Activated CD4-positive, alpha-beta T cell treated with anti-CD3 and anti-CD28 coated beads for 36 hours (primary cell): ENCODE measurements at regions of chr1 and their contacts with region 1.

Region 1: DNA sequence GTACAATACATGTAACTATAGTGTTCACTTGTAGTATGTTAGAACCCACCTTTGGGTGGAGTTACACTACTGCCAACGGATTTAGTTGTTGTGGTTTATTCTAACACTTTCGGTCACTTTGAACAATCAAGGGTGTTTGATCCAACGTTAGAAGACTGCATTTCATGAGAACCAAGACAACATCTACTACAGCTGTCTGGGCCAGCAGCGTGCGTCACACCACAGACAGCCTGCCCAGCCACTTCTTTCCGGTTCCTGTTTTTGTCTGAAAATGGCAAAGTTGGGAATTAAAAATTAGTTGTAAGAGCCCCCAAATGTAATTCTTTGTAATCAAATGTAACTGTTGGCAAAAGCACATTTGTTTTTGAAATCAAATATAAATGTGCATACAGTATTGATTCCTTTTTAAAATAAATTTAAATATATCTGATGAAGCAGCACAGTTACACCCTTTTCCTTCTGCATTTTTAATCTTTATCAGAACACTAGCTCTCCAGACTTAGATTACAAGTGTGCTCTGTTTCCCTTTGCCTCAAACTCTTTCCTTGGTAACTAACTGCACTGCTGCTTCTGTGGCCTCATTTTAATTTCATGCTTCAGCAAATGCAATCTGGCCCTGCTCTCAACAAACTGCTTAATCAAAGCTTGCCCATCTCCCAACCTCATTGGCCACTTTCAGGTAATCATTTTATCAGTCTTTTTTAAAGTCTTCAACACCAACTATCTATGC is 86.6 kb upstream of the DPH5 start:
- DNase-seq: peak; percentile 73
- ATAC-seq: peak; percentile 88
- H3K4me3 Mint-ChIP-seq: peak overlapping the region; percentile 32
- H3K27ac Mint-ChIP-seq: peak overlapping the region; percentile 94
- H3K4me1 Mint-ChIP-seq: peaks cover 58% of the 10 kb centered on the region
- H3K27me3 Mint-ChIP-seq: no peaks in the 10 kb centered on the region

Region 2: DNA sequence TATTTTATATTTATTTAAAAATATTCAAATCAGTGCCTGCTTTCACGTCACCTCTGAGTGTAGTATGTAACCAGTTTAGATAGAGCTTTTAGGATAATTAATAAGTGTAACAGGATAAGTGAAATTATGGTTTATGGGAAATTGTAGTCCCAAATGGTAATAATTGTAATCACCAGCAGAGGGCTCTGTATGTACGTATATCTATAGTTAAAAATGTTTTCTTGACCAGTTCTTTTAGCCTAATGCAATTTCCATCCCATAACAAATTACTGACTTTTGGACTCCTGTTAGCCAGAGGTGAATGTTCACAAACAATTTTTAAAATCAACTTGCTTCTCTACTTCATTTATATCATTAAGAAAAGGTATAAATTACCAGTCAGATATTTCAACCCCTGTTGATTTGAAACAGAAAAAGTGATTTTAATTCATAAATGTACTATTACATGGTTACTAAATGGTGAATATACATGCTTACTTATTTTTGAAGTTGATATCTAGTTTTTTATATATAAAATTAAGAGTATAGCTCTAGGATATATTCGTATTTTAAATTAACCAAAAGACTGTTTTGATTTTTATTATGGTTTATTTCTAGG is 191.0 kb before region 1 on chr1:
- CTCF ChIA-PET with region 1: no interaction called
- POLR2A ChIA-PET with region 1: no interaction called
- intact Hi-C with region 1: loop called in 1 of 2 experiments (anchors 5 kb)
- DNase-seq: no peak
- ATAC-seq: no peak
- H3K4me3 Mint-ChIP-seq: no peak overlapping the region
- H3K27ac Mint-ChIP-seq: peak overlapping the region; percentile 70
- H3K4me1 Mint-ChIP-seq: peaks cover 43% of the 10 kb centered on the region
- H3K27me3 Mint-ChIP-seq: no peaks in the 10 kb centered on the region

Region 3: GRCh38 chr1:100955322-100955721 is 156.9 kb before region 1 on chr1:
- CTCF ChIA-PET with region 1: no interaction called
- POLR2A ChIA-PET with region 1: no interaction called
- intact Hi-C with region 1: loop called in 1 of 2 experiments (anchors 5 kb)
- DNase-seq: no peak
- ATAC-seq: peak; percentile 57
- H3K4me3 Mint-ChIP-seq: no peak overlapping the region
- H3K27ac Mint-ChIP-seq: peak overlapping the region; percentile 69
- H3K4me1 Mint-ChIP-seq: peaks cover 59% of the 10 kb centered on the region
- H3K27me3 Mint-ChIP-seq: no peaks in the 10 kb centered on the region

Region 4: DNA sequence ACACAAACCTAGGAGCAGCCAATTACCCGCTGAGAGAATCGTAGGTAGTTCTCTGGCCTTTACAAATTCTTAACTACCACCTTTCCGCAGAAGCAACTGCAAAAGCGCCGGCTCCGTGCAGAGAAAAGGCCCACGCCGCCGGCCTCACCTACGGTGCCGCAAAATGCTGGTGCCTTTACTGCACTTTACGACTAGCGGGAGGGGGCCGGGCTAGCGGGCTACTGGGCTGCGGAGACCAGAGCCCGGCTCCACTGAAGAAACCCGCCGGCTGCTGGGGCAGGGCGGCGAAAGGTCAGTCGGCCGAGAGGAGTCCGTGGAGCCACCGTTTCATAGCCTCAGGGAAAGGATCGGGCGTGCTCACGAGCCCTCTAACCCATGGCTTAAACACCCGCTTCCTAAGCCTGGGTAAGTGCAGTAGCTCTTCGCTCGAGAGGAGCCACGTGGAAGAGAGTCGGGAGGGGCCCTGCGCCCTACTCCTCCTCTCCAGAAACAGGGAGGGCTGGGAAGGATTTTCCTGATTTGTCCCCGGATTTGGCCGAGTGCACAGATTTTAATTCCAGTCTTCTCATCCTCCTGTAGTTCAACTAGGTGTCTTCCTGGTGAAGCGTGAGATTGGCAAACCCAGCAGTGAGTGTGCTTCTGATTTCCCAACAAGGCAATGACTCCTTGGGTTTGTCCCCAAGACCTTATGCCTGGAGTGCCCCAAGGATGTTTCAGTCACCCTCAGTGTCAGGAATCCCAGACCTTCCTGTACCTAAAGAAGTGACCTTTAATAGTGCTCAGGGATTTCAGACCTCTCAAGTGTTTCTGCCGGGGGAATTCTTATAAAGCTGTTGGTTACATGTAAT is 86.3 kb before region 1 on chr1 and contains the start of gene DPH5:
- CTCF ChIA-PET with region 1: no interaction called
- POLR2A ChIA-PET with region 1: no interaction called
- intact Hi-C with region 1: loop called in 1 of 2 experiments (anchors 5 kb)
- DNase-seq: peak; percentile 95
- ATAC-seq: peak; percentile 96
- H3K4me3 Mint-ChIP-seq: peak within 1 kb of the TSS; percentile 93
- H3K27ac Mint-ChIP-seq: peak within 1 kb of the TSS; percentile 98
- H3K4me1 Mint-ChIP-seq: peaks cover 55% of the 10 kb centered on the region
- H3K27me3 Mint-ChIP-seq: no peaks in the 10 kb centered on the region
- total RNA-seq, gene DPH5: 48.4 to 59.6 TPM

Region 5: GRCh38 chr1:101178688-101179491 is 66.7 kb after region 1 on chr1:
- CTCF ChIA-PET with region 1: no interaction called
- POLR2A ChIA-PET with region 1: no interaction called
- intact Hi-C with region 1: no loop called
- DNase-seq: peak; percentile 65
- ATAC-seq: peak; percentile 69
- H3K4me3 Mint-ChIP-seq: peak overlapping the region; percentile 71
- H3K27ac Mint-ChIP-seq: peak overlapping the region; percentile 99
- H3K4me1 Mint-ChIP-seq: peaks cover 87% of the 10 kb centered on the region
- H3K27me3 Mint-ChIP-seq: no peaks in the 10 kb centered on the region